ENCODE measurements at regions of chr17 and their contacts with region 1.

Region 1: GRCh38 chr17:81977211-81978027 is at the start of gene ASPSCR1:
- DNase-seq: peak; percentile 86
- H3K4me3 Mint-ChIP-seq: peak within 1 kb of the TSS; percentile 97
- H3K27ac Mint-ChIP-seq: peak within 1 kb of the TSS; percentile 99
- H3K4me1 Mint-ChIP-seq: peaks cover 32% of the 10 kb centered on the region
- H3K27me3 Mint-ChIP-seq: peaks cover 9% of the 10 kb centered on the region
- total RNA-seq, gene ASPSCR1: 32.2 and 33.8 TPM in 2 replicates

Region 2: DNA sequence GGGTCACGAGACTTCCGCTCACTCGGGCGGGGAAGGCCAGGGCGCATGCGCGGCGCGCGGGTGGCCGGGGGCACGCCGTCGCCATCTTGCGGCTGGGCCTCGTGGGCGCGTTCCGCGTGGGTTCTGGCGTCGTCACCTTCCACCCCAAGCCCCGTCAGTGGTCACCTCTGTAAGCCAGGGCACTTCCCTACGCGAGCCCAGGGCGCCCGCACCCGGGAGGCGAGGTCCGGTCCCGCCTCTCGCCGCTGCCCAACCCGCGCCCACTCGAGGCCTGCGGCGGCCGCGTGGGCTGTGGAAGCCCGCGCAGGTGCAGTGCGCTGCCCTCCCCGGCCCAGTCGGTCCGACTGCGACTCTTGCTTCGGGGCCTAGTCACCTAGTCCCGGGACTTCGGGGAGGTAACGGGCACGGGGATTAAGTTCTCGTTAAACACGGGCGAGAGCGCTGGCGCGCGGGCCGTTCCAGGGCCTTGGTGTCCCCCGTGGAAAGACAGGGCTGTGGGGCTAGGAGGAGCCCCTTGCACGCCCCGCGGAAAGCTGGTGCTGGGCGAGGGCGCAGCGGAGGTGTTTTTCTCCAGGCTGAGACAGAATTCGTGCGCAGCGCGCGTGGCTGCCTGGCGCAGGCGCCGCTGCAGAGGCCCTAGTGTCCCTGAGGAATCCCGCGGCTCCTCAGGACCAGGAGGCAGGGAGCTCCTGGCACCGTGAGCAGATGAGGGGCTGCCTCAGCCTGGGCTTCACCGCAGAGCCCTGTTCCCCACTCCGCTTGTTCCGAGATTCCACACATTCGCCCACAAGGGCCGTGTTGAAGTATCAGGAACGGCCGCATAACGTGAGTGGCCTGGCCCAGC is 105.8 kb before region 1 on chr17:
- intact Hi-C with region 1: loop called (anchors 5 kb)
- DNase-seq: peak; percentile 96
- H3K4me3 Mint-ChIP-seq: peak overlapping the region; percentile 84
- H3K27ac Mint-ChIP-seq: peak overlapping the region; percentile 90
- H3K4me1 Mint-ChIP-seq: peaks cover 7% of the 10 kb centered on the region
- H3K27me3 Mint-ChIP-seq: no peaks in the 10 kb centered on the region

Region 3: DNA sequence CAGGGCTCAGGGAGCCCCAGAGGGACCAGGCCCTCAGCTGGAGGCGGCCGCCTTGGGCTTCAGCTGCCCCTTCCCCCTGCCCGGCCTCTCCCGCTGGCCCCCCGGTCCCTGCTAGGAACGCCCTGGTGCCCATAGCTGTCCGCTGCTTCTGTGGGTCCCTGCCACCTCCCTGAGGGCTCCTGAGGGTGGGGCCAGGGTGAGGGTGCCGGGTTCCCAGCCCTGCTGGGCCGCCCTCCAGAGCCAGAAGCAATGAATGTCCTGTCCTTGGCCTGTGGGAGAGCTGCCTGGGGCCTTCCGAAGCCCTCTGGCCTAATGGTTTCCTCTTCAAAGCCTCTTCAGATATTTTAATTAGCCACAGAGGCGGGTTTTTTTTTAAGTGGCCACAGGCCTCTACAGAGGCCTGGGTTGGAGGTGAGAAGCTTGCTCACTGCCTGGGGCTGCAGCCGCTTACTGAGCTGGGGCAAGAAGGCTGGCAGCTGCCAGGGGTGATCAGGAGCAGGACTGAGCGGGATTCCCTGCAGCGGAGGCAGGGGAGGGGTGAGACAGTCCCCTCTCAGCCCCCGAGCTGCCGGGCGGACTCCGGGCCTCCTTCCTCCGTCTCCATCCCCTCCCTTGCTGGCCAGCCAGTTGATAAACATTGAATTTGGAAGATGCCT is 35.3 kb after region 1 on chr17:
- intact Hi-C with region 1: loop called (anchors 1 kb)
- DNase-seq: no peak
- H3K4me3 Mint-ChIP-seq: no peak overlapping the region
- H3K27ac Mint-ChIP-seq: no peak overlapping the region
- H3K4me1 Mint-ChIP-seq: no peaks in the 10 kb centered on the region
- H3K27me3 Mint-ChIP-seq: no peaks in the 10 kb centered on the region

Region 4: DNA sequence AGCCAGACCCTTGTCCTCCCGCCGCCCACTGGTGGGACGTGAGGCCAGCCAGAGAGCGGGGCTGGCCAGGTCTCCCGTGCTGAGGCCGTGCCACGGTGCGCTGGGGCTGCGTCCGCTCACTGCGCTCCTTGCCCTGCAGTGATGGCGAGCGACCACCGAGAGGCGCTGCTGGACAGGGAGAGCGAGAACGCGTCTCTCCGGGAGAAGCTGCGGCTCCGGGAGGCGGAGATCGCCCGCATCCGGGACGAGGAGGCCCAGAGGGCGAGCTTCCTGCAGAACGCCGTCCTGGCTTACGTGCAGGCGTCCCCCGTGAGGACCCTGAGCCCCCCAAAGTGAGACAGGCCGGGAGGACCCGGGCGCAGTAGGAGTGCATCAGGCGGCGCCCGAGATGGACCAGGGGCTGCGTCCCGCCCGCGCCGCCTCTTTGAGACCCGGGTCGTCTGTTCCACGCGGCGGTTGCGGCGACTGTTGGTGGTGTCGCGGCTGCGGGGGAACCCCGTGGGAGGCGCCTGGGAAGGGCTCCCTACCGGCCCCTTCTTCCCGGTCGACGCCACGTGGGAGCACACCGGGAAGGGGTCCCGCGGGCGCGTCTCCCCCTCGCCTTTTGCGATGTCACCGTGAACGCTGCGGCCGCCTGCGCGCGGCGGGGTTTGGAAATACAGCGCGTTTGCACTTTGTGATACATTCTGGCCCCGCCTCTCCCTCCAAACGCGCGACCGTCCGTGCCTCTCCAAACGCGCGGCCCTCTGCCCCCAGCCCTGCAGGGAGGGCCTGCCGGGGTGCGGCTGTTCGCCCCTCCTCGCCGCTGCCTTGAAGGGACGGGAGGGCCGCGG is 53.3 kb after region 1 on chr17:
- intact Hi-C with region 1: loop called (anchors 2 kb)
- DNase-seq: peak; percentile 84
- H3K4me3 Mint-ChIP-seq: peak overlapping the region; percentile 87
- H3K27ac Mint-ChIP-seq: peak overlapping the region; percentile 84
- H3K4me1 Mint-ChIP-seq: peaks cover 8% of the 10 kb centered on the region
- H3K27me3 Mint-ChIP-seq: no peaks in the 10 kb centered on the region

Measured in activated T-helper 1 cell treated with anti-CD3 and anti-CD28 coated beads, Interleukin-12 subunit alpha, Interleukin-12 subunit beta, Interleukin-2, Interleukin-4 antibody, amounts not matched to agents 30 ng/mL and 10 ng/mL and 1 ng/mL, durations not matched to agents 14 hours and 24 hours and 36 hours (primary cell).